Prostate gland (tissue), 2 donors: ENCODE measurements at regions of chr5 and their contacts with region 1.

Region 1: GRCh38 chr5:119411935-119412602 is 40.2 kb upstream of the HSD17B4 start:
- DNase-seq: peak; percentile 66
- H3K4me3 ChIP-seq: peak overlapping the region; percentile 19 to 39
- H3K27ac ChIP-seq: peak overlapping the region; percentile 66 to 70
- H3K4me1 ChIP-seq: no peaks in the 10 kb centered on the region
- H3K27me3 ChIP-seq: no peaks in the 10 kb centered on the region
- CTCF ChIP-seq: peak; percentile 91 to 96 (median 94)
- POLR2A ChIP-seq: no peak

Region 2: DNA sequence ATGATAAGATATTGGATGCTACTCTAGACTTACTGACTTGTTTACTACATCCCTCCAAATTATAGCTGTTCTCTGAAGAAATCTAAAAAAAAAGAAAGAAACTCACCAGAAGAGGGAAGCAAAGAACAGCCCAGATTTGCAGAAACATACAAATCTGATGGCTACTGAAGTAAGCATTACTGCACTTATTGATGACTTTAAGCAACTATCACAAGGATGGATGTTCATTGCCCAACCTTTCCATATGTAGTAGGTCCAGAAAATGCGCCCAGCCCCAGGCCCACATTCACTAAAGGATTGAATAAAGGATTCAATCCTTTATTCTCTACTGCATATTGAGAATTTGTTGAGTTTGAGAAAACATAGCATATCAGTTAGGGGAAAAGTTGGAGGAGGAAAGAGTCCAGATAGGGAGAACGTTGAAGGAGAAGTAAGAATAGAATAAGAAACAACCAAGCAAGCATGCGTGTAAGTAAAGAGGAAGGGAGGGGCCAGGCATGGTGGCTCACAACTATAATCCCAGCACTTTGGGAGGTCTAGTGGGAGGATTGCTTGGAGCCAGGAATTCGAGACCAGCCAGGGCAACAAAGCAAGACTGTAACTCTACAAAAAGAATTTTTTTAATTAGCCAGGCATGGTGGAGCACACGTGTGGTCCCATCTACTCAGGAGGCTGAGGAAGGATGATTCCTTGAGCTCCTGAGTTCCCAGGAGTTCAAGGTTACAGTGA is 389.9 kb before region 1 on chr5:
- intact Hi-C with region 1: loop called (anchors 10 kb)
- DNase-seq: no peak
- H3K4me3 ChIP-seq: no peak overlapping the region
- H3K27ac ChIP-seq: no peak overlapping the region
- H3K4me1 ChIP-seq: no peaks in the 10 kb centered on the region
- H3K27me3 ChIP-seq: no peaks in the 10 kb centered on the region
- CTCF ChIP-seq: peak in 2 of 4 experiments; percentile 57 to 67
- POLR2A ChIP-seq: no peak

Region 3: GRCh38 chr5:119336845-119337580 is 75.1 kb before region 1 on chr5:
- intact Hi-C with region 1: loop called (anchors 2 kb)
- DNase-seq: no peak
- H3K4me3 ChIP-seq: no peak overlapping the region
- H3K27ac ChIP-seq: no peak overlapping the region
- H3K4me1 ChIP-seq: peaks cover 6% of the 10 kb centered on the region
- H3K27me3 ChIP-seq: no peaks in the 10 kb centered on the region
- CTCF ChIP-seq: no peak
- POLR2A ChIP-seq: no peak

Region 4: DNA sequence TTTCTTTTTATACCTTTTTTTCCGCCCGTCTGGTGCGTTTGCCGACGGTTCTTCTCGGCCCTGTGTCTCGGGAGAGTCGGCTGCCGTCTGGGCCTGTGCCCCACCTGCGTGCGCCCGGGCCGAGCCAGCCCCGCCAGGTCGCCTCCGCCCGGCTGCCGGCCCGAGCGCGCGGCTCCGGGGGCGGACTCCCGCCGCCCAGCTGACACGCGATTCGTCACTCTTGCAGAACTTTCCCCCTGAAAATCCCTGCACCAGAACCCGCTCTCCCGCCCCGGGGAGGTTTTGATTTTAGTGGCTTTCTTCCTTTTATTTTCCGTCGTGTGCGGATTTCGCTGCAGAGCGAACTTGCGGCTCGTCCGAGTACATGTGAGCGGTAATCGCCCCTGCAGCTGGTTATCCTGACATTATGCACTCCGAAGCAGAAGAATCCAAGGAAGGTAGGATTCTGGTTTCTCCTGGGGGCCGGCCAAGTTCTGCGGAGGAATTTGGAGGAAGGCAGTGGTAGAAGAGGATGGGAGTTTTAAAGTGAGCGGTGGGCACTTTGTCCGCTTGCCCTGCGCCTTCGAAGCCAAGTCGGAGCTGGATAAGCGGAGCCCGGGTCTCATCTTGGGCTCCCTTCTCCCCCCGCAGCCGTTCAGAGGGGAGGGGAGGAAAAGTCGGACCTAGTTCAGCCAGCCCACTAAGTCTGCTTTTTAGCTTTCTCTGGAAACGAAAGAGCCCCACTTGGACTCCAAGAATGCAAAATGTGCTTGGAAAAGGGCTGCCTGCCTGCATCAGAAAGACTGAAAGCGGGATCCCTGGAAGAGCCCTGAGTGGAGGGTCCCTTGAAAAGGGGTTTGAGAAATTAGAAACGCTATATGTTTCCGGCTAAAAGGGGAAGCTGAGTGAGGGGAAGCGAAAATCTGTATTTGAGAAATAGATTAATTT is 56.1 kb before region 1 on chr5 and contains the start of gene TNFAIP8:
- intact Hi-C with region 1: loop called (anchors 5 kb)
- DNase-seq: peak; percentile 43
- H3K4me3 ChIP-seq: peak within 1 kb of the TSS; percentile 42 to 48
- H3K27ac ChIP-seq: peak within 1 kb of the TSS; percentile 45 to 66
- H3K4me1 ChIP-seq: no peaks in the 10 kb centered on the region
- H3K27me3 ChIP-seq: no peaks in the 10 kb centered on the region
- CTCF ChIP-seq: no peak
- POLR2A ChIP-seq: peak; percentile 43
- total RNA-seq, gene TNFAIP8: 21.6 to 40.0 TPM

Region 5: DNA sequence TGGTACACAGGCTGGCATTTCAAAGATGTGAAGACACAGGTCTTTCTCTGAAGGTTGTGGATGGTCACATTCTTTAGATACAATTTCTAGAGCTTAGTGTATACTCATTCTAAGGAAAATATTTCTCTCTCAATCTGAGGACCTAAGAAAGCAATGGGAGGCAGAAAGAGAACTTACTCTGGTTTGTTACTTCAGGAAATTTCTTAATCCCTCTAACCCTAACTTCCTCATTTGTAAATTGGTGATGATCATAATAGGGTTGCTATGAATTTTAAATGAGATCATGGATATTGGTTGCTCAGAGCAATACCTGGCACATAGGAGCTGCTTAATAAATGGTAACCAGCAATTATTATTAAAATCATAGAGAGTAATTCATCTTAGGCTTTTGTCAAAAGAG is 239.4 kb after region 1 on chr5:
- intact Hi-C with region 1: no loop called
- DNase-seq: no peak
- H3K4me3 ChIP-seq: no peak overlapping the region
- H3K27ac ChIP-seq: no peak overlapping the region
- H3K4me1 ChIP-seq: no peaks in the 10 kb centered on the region
- H3K27me3 ChIP-seq: no peaks in the 10 kb centered on the region
- CTCF ChIP-seq: no peak
- POLR2A ChIP-seq: no peak